ENCODE measurements at regions of chr14 and their contacts with region 1.

Region 1: DNA sequence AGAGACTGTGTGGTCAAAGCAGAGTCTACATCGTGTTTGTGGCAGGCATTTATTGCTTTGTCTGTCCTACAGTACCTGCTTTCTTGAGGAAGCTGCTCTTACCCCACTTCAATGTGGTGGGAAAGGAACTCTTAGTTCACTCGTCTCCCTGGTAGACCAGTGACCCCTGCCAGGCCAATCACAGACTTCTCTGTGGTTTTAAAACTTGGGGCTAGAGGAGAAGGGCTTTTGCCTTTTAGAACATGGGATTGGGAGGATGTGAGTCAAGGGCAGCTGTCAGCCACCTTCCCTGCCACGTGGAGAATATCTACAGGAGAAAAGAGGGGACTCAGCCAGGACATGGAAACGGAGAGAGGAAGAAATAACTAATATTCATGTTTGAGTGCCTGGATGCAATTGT is 36.8 kb upstream of the TMED10 start:
- DNase-seq: no peak
- H3K27ac ChIP-seq: no peak overlapping the region
- CTCF ChIP-seq: no peak

Region 2: GRCh38 chr14:75202657-75203056 is 10.5 kb before region 1 on chr14:
- CTCF ChIA-PET with region 1: interaction called, 10 read pairs
- POLR2A ChIA-PET with region 1: no interaction called
- DNase-seq: no peak
- H3K27ac ChIP-seq: no peak overlapping the region
- CTCF ChIP-seq: no peak

Region 3: DNA sequence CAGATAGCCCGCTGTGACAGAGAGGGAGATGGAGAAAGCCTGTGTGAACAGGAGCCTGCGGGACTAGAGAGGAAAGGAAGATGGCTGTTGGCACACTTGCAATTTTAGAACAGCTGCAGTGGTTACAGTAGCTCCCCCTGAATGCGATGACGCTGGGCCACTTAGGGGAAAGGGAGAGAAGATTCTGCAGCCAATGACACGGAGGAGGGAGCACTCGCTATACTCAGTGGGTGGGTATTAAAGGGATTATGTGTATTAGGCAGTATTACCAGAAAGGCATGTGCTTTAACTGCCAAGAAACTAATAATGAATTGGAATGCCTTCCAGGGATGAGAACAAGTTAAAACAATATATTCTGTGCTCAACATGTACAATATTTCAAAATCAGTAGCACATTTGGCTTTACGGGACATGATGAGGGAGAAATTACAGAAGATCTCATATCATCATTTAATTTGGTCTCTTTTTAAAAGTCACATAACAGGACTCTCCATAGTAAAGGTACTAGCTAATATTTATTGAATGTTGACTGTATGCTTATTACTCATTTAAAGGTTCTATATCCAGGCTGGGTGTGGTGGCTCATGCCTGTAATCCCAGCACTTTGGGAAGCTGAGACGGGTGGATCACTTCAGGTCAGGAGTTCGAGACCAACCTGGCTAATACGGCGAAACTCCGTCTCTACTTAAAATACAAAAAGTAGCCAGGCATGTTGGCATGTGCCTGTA is 29.5 kb after region 1 on chr14:
- CTCF ChIA-PET with region 1: no interaction called
- POLR2A ChIA-PET with region 1: no interaction called
- DNase-seq: peak; percentile 66
- H3K27ac ChIP-seq: peak overlapping the region; percentile 98
- CTCF ChIP-seq: no peak

Measured in RWPE1 (cell line).